Right ventricle myocardium inferior (tissue), 1 donor: ENCODE measurements at regions of chr4 and their contacts with region 1.

Region 1: DNA sequence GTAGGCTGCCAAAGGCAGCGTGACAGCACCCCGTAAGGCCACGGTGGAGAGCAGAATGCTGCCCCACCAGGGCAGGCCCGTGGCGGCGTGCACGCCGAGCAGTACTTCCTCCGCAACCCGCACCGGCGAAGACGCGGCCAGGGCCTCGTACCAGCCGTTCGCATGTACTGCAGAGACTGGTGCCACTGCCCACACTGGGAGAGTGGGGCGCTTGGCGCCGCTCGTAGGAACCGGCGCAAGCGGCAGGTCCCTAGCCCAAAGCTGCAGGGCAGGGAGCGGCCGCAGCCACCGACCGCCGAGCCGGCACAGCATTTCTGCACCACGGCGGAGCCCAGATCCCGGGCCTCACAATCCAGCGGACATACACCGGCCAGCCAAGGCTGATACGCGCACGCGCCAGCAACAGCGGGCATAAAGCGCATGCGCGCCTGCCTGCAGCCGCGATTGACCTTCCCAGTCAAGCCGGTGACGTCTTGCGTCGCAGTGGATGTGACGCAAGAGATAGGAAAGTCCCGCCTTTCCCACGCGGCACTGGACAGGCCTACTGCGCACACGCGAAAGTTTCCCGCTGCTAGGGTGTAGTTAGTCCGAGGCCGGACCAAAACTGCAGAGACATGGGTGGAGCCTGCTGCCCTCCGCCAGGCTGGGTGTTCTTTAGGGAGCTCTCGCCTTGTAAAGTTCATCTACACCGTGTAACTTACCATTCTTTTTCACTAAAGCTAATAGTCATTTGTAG is at the start of gene COX18:
- DNase-seq: peak; percentile 99
- ATAC-seq: peak; percentile 97
- total RNA-seq, gene COX18: 14.9 TPM

Region 2: DNA sequence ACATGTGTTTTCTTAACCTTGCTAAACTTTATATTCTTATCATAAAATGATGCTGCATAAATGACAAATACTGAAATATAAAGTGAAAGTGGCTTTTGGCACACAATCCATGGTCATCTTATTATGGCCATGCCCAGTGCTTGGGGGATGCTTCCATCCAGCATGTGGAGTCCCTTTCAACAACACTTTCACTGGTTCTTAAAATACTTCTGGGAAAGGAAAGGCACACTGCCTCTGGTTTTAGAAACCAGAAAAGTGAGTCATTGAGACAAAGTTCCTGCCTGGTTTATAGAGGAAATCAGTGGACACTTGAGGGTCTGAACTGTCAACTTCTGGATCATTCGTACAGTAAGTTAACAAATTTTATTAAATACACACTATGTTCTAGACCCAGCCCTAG is 252.5 kb before region 1 on chr4:
- intact Hi-C with region 1: no loop called
- DNase-seq: no peak
- ATAC-seq: no peak

Region 3: GRCh38 chr4:72909461-72909860 is 160.0 kb before region 1 on chr4:
- intact Hi-C with region 1: no loop called
- DNase-seq: no peak
- ATAC-seq: no peak

Region 4: GRCh38 chr4:73127839-73128453 is 58.4 kb after region 1 on chr4:
- intact Hi-C with region 1: loop called (anchors 5 kb)
- DNase-seq: no peak
- ATAC-seq: peak; percentile 44

Region 5: GRCh38 chr4:73258686-73259570 is 189.4 kb after region 1 on chr4 and contains the start of gene ANKRD17:
- intact Hi-C with region 1: loop called (anchors 1 kb)
- DNase-seq: peak; percentile 96
- ATAC-seq: peak; percentile 92
- total RNA-seq, gene ANKRD17: 50.7 TPM

Region 6: DNA sequence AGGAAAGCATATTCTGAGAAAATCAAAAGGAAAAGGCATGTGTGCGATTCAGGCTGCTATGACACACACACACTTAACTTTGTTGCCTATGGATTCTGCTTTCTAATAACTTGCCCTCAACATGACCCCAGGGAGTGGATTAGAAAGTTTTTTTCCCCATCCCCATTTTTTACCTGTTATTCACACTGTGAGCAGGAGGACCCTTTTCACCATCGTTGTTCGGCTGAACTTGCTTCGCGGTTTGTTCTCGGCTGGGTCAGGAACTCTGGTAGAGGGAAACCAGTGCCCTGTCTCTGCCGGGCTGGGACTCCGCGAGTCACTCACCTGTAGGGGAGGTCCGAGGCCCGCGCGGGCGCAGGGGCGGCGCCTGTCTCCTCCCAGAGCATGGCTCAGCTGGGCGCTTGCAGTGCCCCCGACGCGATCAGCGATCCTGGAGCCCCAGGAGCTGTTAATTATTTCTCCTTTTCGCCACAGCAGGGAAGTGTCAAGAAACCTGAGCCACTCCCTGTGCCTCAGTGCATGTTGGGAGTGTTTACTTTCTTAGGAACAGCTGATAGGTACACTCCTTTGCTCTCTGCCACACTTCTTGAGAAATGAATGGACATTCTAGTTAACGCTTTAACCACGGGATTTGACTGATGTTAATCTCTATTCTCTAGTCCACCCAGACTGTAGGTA is 550.7 kb after region 1 on chr4 and contains the start of gene RASSF6:
- intact Hi-C with region 1: no loop called
- DNase-seq: peak; percentile 64
- ATAC-seq: no peak
- total RNA-seq, gene RASSF6: not detected

Region 7: GRCh38 chr4:74157561-74158465 is 1088.3 kb after region 1 on chr4 and contains the start of gene MTHFD2L:
- intact Hi-C with region 1: loop called (anchors 10 kb)
- DNase-seq: peak; percentile 96
- ATAC-seq: peak; percentile 100
- total RNA-seq, gene MTHFD2L: 10.1 TPM